Aorta (tissue), 5 donors: ENCODE measurements at regions of chr13 and their contacts with region 1.

Region 1: GRCh38 chr13:48975856-48976575 is at the start of gene FNDC3A:
- DNase-seq: peak; percentile 90 to 94
- ATAC-seq: peak; percentile 95
- H3K4me3 ChIP-seq: peak within 1 kb of the TSS; percentile 75 to 91
- H3K27ac ChIP-seq: peak within 1 kb of the TSS; percentile 90 to 95
- H3K4me1 ChIP-seq: peaks cover 3 to 8% of the 10 kb centered on the region in 2 donors
- H3K27me3 ChIP-seq: no peaks in the 10 kb centered on the region
- total RNA-seq, gene FNDC3A: 68.5 to 70.2 TPM

Region 2: DNA sequence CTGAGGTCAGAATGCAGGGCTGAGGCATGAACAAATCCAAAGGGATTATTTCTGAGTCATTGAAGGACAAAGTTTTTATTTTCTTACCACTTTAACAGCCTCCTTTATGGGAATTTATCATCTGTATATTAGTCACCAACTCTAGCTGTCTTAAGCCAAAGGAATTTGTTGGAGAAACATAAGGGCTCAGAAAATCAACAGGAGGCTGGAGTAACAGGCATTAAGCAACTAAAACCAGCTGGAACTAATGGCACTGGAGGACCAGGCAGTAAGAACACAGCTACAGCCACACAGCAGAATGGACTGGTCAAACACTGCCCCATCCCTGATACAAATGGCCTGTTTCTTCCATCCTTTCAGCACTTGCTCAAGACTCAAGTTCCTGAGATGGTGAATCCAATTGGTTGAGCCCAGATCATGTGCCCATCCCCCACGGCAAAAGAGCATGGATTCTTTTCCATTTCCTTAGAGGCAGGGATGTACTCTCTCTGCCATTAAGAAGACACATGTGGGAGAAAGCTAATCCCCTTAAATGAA is 157.5 kb before region 1 on chr13:
- intact Hi-C with region 1: loop called (anchors 10 kb)
- DNase-seq: no peak
- ATAC-seq: peak; percentile 73
- H3K4me3 ChIP-seq: no peak overlapping the region
- H3K27ac ChIP-seq: peak overlapping the region; percentile 67 to 93
- H3K4me1 ChIP-seq: peaks cover 3 to 9% of the 10 kb centered on the region in 2 donors
- H3K27me3 ChIP-seq: no peaks in the 10 kb centered on the region

Region 3: DNA sequence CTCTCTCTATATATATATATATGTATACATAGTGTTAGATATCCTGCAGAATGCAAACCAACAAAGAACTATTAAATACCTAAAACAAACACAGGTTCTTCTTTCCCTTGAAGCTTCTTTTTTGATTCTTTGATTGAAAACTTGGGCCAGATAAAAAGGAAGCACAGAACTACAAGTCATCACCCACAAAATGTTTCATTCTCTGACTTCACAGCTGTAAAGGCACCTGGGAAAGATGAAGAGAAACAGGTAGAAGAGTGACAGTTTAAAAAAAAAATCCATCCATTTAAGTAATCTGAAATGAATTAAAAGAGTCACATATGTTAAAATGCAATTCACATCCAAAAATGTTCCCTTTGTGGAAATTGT is 91.0 kb before region 1 on chr13:
- intact Hi-C with region 1: loop called (anchors 2 to 5 kb)
- DNase-seq: no peak
- ATAC-seq: no peak
- H3K4me3 ChIP-seq: no peak overlapping the region
- H3K27ac ChIP-seq: peak overlapping the region in 1 of 2 donors; percentile 71
- H3K4me1 ChIP-seq: peaks cover 2 to 3% of the 10 kb centered on the region in 2 donors
- H3K27me3 ChIP-seq: no peaks in the 10 kb centered on the region

Region 4: GRCh38 chr13:48892053-48892690 is 83.8 kb before region 1 on chr13:
- intact Hi-C with region 1: loop called in 1 of 2 experiments (anchors 5 kb)
- DNase-seq: no peak
- ATAC-seq: no peak
- H3K4me3 ChIP-seq: no peak overlapping the region
- H3K27ac ChIP-seq: no peak overlapping the region
- H3K4me1 ChIP-seq: peaks cover 2 to 4% of the 10 kb centered on the region in 2 donors
- H3K27me3 ChIP-seq: no peaks in the 10 kb centered on the region

Region 5: GRCh38 chr13:49110122-49110912 is 134.3 kb after region 1 on chr13:
- intact Hi-C with region 1: loop called in 1 of 2 experiments (anchors 10 kb)
- DNase-seq: peak; percentile 87 to 90
- ATAC-seq: peak; percentile 77
- H3K4me3 ChIP-seq: peak overlapping the region; percentile 54 to 79
- H3K27ac ChIP-seq: no peak overlapping the region
- H3K4me1 ChIP-seq: no peaks in the 10 kb centered on the region
- H3K27me3 ChIP-seq: no peaks in the 10 kb centered on the region

Region 6: GRCh38 chr13:49731766-49732165 is 755.8 kb after region 1 on chr13:
- intact Hi-C with region 1: no loop called
- DNase-seq: no peak
- ATAC-seq: no peak
- H3K4me3 ChIP-seq: no peak overlapping the region
- H3K27ac ChIP-seq: no peak overlapping the region
- H3K4me1 ChIP-seq: no peaks in the 10 kb centered on the region
- H3K27me3 ChIP-seq: no peaks in the 10 kb centered on the region